Mammary epithelial cell (primary cell): ENCODE measurements at regions of chr20 and their contacts with region 1.

Region 1: DNA sequence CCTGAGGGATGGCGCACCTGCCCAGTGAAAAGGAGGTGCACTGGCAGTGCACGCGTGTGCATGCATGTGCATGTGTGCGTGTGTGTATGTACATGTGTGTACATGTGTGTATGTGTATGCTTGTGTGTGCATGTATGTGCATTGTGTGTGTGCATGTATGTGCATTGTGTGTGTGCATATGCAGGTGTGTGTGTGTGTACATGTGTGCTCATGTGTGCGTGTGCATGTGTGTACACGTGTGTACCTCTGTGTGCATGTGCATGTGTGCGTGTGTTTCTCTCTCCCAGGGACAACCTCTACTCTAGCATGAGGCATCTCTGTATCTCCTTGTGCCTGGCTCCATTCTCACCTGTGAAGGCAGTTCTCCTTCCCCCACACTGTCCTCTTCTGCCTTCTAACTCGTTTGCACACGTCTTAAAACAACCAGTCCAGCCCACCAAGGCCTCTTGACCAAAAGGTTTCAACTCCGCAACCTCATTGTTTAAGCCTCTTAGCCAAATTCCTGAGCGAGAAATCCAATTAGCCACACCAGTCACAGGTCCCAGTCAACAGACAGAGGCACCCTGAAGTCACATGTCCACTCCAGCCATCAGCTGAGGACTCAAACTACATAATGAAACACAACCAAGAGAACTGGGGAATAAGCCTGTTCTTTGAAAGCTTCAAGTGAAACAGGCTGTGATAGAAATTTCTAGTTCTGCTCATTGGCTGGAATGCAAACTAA is 103.5 kb upstream of the PTPRT start:
- DNase-seq: no peak
- H3K4me3 ChIP-seq: no peak overlapping the region
- H3K27ac ChIP-seq: no peak overlapping the region
- H3K4me1 ChIP-seq: no peaks in the 10 kb centered on the region
- H3K27me3 ChIP-seq: no peaks in the 10 kb centered on the region
- CTCF ChIP-seq: no peak

Region 2: GRCh38 chr20:43238833-43239232 is 54.4 kb before region 1 on chr20:
- CTCF ChIA-PET with region 1: no interaction called
- dilution Hi-C with region 1: loop called (anchors 10 kb)
- in situ Hi-C with region 1: no loop called
- intact Hi-C with region 1: no loop called
- DNase-seq: no peak
- H3K4me3 ChIP-seq: no peak overlapping the region
- H3K27ac ChIP-seq: no peak overlapping the region
- H3K4me1 ChIP-seq: no peaks in the 10 kb centered on the region
- H3K27me3 ChIP-seq: no peaks in the 10 kb centered on the region
- CTCF ChIP-seq: no peak

Region 3: GRCh38 chr20:43345676-43346075 is 52.5 kb after region 1 on chr20:
- CTCF ChIA-PET with region 1: no interaction called
- dilution Hi-C with region 1: loop called (anchors 10 kb)
- in situ Hi-C with region 1: no loop called
- intact Hi-C with region 1: no loop called
- DNase-seq: no peak
- H3K4me3 ChIP-seq: no peak overlapping the region
- H3K27ac ChIP-seq: no peak overlapping the region
- H3K4me1 ChIP-seq: no peaks in the 10 kb centered on the region
- H3K27me3 ChIP-seq: no peaks in the 10 kb centered on the region
- CTCF ChIP-seq: no peak